ENCODE measurements at regions of chr14 and their contacts with region 1.

Region 1: DNA sequence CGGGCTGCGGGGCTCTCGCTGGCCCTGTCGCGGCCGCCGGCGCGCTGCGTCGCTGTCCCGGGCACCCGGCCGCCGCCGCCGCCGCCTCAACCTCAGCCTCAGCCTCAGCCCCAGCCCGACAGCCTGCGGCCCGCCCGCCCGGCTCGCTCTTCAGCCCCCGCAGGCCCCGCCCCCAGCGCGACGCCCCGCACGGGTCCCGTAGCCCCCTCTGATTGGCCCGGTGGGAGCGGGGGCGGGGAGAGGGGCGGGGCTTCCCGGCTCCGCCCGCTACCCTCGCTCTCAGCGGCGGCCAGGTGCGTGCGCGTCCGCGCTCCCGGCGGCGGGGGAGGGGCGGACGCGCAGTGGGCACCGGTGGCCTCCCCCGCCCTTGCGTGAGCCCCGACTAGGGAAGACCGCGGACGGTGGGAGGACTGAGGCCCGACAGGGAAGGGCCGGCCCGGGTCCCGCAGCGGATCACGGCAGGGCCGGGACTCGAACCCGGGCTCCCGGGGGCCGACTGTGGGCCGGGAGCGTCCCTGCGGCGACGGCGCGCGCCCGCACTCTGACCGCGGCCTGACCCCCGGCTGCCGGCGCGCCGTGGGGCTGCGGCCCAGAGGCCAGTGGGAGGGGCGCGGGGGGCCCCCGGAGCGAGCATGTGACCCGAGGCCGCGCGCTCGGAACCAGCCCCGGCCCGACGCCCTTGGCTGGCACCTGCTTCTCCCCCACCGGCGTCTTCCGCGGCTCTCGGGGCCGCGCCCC is at the start of gene PPP1R13B:
- DNase-seq: peak; percentile 85
- H3K4me3 Mint-ChIP-seq: peak within 1 kb of the TSS; percentile 81
- H3K27ac Mint-ChIP-seq: peak within 1 kb of the TSS; percentile 46
- H3K4me1 Mint-ChIP-seq: peaks cover 9% of the 10 kb centered on the region
- H3K27me3 Mint-ChIP-seq: peaks cover 29% of the 10 kb centered on the region
- total RNA-seq, gene PPP1R13B: 7.8 and 13.5 TPM in 2 replicates

Region 2: DNA sequence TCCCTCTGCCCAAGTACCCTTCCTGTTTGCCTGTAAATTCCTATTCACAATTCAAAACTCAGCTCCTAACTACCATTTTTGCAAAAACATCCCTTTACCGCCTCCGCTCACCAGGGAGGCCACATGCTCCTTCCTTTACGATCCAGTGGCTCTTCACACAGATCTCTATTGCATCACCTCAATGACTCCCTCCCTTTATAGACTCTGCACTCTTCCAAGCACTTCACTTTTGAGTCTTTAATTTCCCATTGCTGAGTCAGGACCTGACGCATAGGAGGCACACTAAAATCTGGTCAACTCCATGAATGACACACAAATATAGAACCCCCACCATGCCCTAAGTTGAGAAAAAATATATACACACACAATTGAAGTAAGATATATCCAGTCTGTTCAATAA is 46.2 kb before region 1 on chr14:
- intact Hi-C with region 1: no loop called
- DNase-seq: no peak
- H3K4me3 Mint-ChIP-seq: no peak overlapping the region
- H3K27ac Mint-ChIP-seq: no peak overlapping the region
- H3K4me1 Mint-ChIP-seq: peaks cover 2% of the 10 kb centered on the region
- H3K27me3 Mint-ChIP-seq: no peaks in the 10 kb centered on the region

Region 3: DNA sequence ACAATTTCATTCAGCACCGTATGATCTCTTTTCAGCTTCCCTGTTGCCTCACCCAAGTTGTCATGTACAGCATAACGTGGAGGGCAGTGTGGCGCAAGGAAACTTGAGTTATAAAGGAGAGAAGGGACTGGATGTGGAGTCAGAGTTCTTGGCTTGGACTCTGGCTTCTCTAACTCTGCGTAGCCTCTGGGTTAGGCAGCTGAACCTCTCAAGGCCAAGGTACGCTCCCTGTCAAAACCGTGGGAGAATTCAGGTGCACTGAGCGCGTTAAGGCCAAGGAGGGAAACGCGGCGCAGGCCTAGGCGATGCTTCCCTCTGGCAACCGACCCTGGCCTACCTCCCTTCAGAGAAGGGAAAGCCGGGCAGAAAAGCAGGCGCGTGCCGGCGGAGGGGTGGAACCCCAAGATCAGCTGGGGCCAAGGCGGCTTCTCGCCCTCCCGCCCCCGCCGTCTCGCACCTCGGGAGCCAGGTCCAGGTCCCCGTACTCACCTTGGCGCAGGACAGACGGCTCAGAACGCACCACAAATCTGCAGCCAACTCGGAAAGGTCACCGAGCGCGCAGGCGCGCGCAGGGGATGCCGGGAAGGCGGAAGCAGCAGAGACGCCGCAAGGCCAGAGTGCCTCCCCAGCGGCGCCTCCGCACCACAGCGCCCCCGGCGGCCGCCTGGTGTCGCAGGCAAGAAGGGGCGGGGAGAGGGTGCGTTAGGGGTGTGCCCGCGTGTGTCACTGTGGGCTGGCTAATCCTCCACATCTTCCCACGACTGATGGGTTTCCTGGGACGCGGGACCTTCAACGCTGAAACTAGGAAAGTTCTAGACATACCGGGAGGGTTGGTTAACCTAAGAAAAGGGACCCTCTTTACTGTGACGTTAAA is 73.6 kb after region 1 on chr14:
- intact Hi-C with region 1: loop called (anchors 2 kb)
- DNase-seq: peak; percentile 94
- H3K4me3 Mint-ChIP-seq: peak overlapping the region; percentile 93
- H3K27ac Mint-ChIP-seq: peak overlapping the region; percentile 68
- H3K4me1 Mint-ChIP-seq: peaks cover 7% of the 10 kb centered on the region
- H3K27me3 Mint-ChIP-seq: peaks cover 5% of the 10 kb centered on the region